AG04450 (cell line): ENCODE measurements at regions of chr2 and their contacts with region 1.

Region 1: GRCh38 chr2:27281855-27282559 is at the start of gene TRIM54:
- DNase-seq: no peak
- H3K4me3 ChIP-seq: no peak within 1 kb of the TSS
- H3K27ac ChIP-seq: no peak within 1 kb of the TSS
- H3K27me3 ChIP-seq: peaks cover 4% of the 10 kb centered on the region
- CTCF ChIP-seq: no peak
- polyA plus RNA-seq, gene TRIM54: 0.05 TPM in 1 of 2 replicates, not detected in the other

Region 2: GRCh38 chr2:27095745-27096651 is 186.0 kb before region 1 on chr2:
- CTCF ChIA-PET with region 1: interaction called, 50 read pairs
- POLR2A ChIA-PET with region 1: no interaction called
- DNase-seq: no peak
- H3K4me3 ChIP-seq: peak overlapping the region; percentile 32
- H3K27ac ChIP-seq: no peak overlapping the region
- H3K27me3 ChIP-seq: no peaks in the 10 kb centered on the region
- CTCF ChIP-seq: no peak

Region 3: GRCh38 chr2:27249891-27250651 is 31.9 kb before region 1 on chr2:
- CTCF ChIA-PET with region 1: interaction called, 41 read pairs
- POLR2A ChIA-PET with region 1: interaction called, 3 read pairs
- DNase-seq: no peak
- H3K4me3 ChIP-seq: no peak overlapping the region
- H3K27ac ChIP-seq: no peak overlapping the region
- H3K27me3 ChIP-seq: peaks cover 15% of the 10 kb centered on the region
- CTCF ChIP-seq: peak; percentile 79

Region 4: DNA sequence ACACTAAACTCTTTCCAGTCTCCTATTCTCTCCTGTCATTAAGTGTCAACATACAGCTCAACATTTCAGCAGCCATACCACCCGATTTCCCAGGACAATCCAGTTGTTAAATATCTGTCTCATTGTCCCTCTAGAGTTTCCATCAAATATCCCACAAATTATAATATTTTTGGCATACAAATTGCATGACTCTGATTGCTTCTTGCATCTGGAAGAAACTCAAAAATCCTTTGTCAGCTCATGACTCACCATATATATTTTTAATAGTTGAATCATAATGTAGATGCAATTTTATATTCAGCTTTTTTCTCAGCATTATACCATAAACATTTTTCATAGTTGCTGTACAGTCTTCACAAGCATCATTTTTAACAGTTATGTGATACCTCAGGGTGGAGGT is 26.3 kb before region 1 on chr2:
- CTCF ChIA-PET with region 1: interaction called, 41 read pairs
- POLR2A ChIA-PET with region 1: no interaction called
- DNase-seq: no peak
- H3K4me3 ChIP-seq: no peak overlapping the region
- H3K27ac ChIP-seq: no peak overlapping the region
- H3K27me3 ChIP-seq: peaks cover 30% of the 10 kb centered on the region
- CTCF ChIP-seq: no peak

Region 5: GRCh38 chr2:27264753-27265535 is 17.1 kb before region 1 on chr2:
- CTCF ChIA-PET with region 1: interaction called, 64 read pairs
- POLR2A ChIA-PET with region 1: no interaction called
- DNase-seq: no peak
- H3K4me3 ChIP-seq: peak overlapping the region; percentile 45
- H3K27ac ChIP-seq: no peak overlapping the region
- H3K27me3 ChIP-seq: peaks cover 69% of the 10 kb centered on the region
- CTCF ChIP-seq: peak; percentile 60

Region 6: GRCh38 chr2:27271631-27272340 is 10.2 kb before region 1 on chr2:
- CTCF ChIA-PET with region 1: interaction called, 64 read pairs
- POLR2A ChIA-PET with region 1: no interaction called
- DNase-seq: no peak
- H3K4me3 ChIP-seq: no peak overlapping the region
- H3K27ac ChIP-seq: no peak overlapping the region
- H3K27me3 ChIP-seq: peaks cover 27% of the 10 kb centered on the region
- CTCF ChIP-seq: no peak

Region 7: GRCh38 chr2:27353762-27354596 is 72.0 kb after region 1 on chr2:
- CTCF ChIA-PET with region 1: no interaction called
- POLR2A ChIA-PET with region 1: no interaction called
- DNase-seq: no peak
- H3K4me3 ChIP-seq: no peak overlapping the region
- H3K27ac ChIP-seq: no peak overlapping the region
- H3K27me3 ChIP-seq: no peaks in the 10 kb centered on the region
- CTCF ChIP-seq: no peak

Region 8: GRCh38 chr2:27566628-27567027 is 284.6 kb after region 1 on chr2:
- CTCF ChIA-PET with region 1: no interaction called
- POLR2A ChIA-PET with region 1: no interaction called
- DNase-seq: no peak
- H3K4me3 ChIP-seq: no peak overlapping the region
- H3K27ac ChIP-seq: no peak overlapping the region
- H3K27me3 ChIP-seq: no peaks in the 10 kb centered on the region
- CTCF ChIP-seq: no peak

Region 9: GRCh38 chr2:27622921-27623384 is 340.9 kb after region 1 on chr2:
- CTCF ChIA-PET with region 1: no interaction called
- POLR2A ChIA-PET with region 1: no interaction called
- DNase-seq: peak; percentile 42
- H3K4me3 ChIP-seq: no peak overlapping the region
- H3K27ac ChIP-seq: no peak overlapping the region
- H3K27me3 ChIP-seq: no peaks in the 10 kb centered on the region
- CTCF ChIP-seq: no peak